Calu3 (cell line): ENCODE measurements at regions of chr12 and their contacts with region 1.

Region 1: GRCh38 chr12:122793685-122794106 is 19.3 kb downstream of the CCDC62 start:
- DNase-seq: peak; percentile 18
- H3K4me3 Mint-ChIP-seq: no peak overlapping the region
- H3K27ac Mint-ChIP-seq: no peak overlapping the region
- H3K4me1 Mint-ChIP-seq: peaks cover 3% of the 10 kb centered on the region
- H3K27me3 Mint-ChIP-seq: no peaks in the 10 kb centered on the region
- CTCF ChIP-seq: peak; percentile 59

Region 2: DNA sequence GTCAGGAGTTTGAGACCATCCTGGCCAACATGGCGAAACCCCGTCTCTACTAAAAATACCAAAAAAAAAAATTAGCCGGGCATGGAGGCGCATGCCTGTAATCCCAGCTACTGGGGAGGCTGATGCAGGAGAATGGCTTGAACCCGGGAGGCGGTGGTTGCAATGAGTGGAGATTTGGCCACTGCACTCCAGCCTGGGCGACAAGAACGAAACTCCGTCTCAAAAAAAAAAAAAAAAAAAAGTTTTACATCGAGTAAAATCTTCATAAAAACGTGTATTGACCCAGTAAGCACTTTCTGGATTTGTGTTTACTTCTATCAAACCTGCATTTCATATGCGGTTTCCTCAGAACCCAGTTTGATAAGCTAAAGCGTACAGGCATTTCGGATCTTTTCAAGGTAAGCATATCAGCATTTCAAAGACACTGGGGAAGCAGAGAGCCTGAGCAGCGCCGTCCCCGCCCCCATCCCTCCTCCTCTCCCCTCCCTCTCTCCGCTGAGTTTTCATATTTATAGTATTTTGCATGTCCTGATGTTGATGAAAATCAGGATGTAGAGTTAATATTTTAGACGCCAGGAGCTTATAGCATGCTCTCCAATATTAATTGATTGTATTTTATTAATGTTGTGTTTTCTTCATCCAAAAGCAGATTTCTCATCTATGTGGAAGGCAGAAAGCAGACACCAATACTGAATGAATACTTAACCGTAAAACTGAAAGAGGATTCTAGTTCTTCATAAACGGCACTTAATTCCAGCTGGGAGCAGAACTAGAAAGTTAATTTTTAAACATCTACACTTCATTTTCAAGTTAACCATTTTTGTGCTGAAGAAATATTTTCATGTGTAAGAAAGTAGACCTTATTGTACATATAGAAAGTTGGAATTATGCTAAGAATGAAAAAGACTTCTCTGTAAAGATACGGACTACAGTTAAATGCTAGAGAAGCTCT is 32.4 kb after region 1 on chr12:
- CTCF ChIA-PET with region 1: interaction called, 15 read pairs
- intact Hi-C with region 1: no loop called
- DNase-seq: peak; percentile 73
- H3K4me3 Mint-ChIP-seq: peak overlapping the region; percentile 56
- H3K27ac Mint-ChIP-seq: peak overlapping the region; percentile 84
- H3K4me1 Mint-ChIP-seq: peaks cover 30% of the 10 kb centered on the region
- H3K27me3 Mint-ChIP-seq: no peaks in the 10 kb centered on the region
- CTCF ChIP-seq: no peak

Region 3: DNA sequence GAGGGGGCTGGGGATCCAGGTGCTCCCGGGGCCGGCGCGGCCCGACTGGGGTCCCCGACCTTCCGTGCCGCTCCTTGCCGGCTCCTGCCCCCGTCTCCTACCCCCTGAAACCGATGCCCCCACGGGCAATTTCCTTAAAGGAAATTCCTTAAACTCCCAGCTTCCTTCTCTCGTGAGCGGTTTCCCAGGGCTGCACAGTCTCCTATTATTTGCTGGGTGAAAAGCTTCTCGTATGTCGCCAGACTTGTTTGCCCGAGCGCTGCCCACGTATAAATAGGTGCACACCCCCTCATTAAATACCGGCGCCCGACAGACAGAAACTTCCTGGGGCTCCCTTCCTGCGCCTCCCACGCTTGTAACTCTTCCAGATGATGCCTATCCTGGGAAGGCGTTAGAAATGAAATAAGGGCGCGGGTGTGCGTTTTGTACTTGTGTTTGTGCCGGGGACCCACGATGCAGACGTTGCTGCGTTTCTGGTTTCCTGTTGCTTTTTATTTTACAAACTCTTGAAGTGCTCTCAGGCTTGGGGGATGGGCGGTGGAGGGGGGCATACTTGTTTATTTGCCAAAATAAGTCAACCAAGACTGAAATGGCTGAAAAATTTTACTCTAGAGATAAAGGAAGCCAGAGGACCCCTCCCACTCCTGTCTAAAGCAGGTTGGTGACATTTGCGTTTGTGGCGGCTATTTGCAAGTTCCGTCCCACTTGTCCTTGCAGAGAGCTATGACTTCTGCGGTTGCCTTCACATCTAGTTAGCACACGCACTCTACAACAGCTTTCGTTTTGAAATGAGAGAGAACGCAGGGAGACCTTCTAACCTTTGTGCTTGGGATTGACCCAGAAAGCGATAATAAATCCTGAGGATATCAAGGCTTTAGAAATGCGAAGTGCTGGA is 42.6 kb after region 1 on chr12:
- CTCF ChIA-PET with region 1: interaction called, 10 read pairs
- intact Hi-C with region 1: loop called (anchors 1 kb)
- DNase-seq: peak; percentile 60
- H3K4me3 Mint-ChIP-seq: peak overlapping the region; percentile 85
- H3K27ac Mint-ChIP-seq: peak overlapping the region; percentile 74
- H3K4me1 Mint-ChIP-seq: peaks cover 56% of the 10 kb centered on the region
- H3K27me3 Mint-ChIP-seq: no peaks in the 10 kb centered on the region
- CTCF ChIP-seq: no peak

Region 4: DNA sequence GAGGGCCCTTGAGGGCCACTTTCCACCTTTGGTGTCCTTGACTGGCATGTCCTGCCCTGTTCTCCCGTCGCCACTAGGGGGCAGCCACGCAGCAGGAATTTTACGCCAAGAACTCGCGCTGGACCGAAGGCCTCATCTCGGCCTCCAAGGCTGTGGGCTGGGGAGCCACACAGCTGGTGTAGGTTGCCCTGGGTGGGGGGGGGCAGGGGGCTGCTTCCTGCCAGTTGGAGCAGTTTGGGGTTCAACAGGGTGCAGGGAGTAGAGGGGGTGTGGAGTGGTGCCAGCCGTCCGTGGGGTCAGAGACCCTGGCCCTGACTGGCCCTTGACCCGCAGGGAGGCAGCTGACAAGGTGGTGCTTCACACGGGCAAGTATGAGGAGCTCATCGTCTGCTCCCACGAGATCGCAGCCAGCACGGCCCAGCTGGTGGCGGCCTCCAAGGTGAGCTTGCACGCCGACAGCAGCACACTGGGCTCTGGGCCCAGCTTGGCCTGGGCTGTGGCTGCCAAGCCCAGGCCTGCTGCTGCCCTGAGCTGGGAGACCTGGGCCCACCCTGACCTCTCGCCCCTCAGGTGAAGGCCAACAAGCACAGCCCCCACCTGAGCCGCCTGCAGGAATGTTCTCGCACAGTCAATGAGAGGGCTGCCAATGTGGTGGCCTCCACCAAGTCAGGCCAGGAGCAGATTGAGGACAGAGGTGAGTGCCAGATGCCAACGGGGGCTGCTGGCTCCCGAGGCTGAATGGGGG is 66.8 kb after region 1 on chr12:
- CTCF ChIA-PET with region 1: interaction called, 4 read pairs
- intact Hi-C with region 1: loop called (anchors 5 kb)
- DNase-seq: peak; percentile 89
- H3K4me3 Mint-ChIP-seq: no peak overlapping the region
- H3K27ac Mint-ChIP-seq: peak overlapping the region; percentile 30
- H3K4me1 Mint-ChIP-seq: peaks cover 7% of the 10 kb centered on the region
- H3K27me3 Mint-ChIP-seq: no peaks in the 10 kb centered on the region
- CTCF ChIP-seq: peak; percentile 91

Region 5: DNA sequence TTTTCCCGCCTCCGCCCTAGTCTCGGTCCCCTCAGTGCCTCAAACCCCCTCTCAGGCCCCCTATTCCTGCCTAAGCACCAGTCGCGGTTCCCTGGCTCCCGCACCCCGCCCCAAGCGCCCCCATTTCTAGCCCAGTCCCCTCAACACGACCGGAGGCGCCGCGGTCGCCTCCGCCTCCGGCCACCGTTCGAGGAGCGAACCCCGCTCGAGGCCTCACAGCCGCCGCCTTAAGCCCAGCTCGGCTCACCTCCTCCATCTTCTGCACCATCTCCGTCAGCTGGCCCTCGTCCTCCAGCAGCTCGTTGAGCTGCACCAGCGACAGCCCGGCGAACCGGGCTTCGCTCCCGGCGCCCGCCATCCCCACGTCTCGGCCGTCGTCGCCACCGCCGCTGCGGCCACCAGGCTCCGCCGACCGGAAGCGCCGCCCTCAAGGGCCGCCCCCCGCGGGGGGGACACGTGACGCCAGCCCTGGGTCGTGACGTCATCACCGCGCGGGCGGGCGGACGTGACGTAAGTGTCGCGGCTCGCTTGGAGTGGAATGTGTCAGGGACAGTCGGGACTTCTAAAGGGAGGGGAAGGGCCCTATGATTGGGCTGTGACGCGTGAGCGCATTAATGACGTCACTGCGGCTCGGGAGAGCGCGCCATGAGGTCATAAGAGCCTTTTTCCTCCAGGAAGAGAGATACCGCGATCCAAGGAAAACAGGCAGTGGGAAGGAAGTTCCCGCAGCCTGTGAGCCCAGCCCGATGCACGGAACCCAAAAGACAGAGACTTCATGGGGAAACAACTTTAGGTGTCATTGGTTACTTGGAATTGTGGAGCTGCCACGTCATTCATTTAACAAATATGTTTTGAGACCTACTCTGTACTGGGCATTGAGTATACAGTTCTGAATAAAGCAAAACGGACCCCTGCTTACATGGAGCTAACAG is 102.3 kb after region 1 on chr12 and contains the start of gene VPS37B:
- CTCF ChIA-PET with region 1: interaction called, 11 read pairs
- intact Hi-C with region 1: no loop called
- DNase-seq: peak; percentile 93
- H3K4me3 Mint-ChIP-seq: peak within 1 kb of the TSS; percentile 100
- H3K27ac Mint-ChIP-seq: peak within 1 kb of the TSS; percentile 98
- H3K4me1 Mint-ChIP-seq: peaks cover 48% of the 10 kb centered on the region
- H3K27me3 Mint-ChIP-seq: no peaks in the 10 kb centered on the region
- CTCF ChIP-seq: no peak
- total RNA-seq, gene VPS37B: 104 and 118 TPM in 2 replicates